Sigmoid colon (tissue), 7 donors: ENCODE measurements at regions of chr11 and their contacts with region 1.

Region 1: DNA sequence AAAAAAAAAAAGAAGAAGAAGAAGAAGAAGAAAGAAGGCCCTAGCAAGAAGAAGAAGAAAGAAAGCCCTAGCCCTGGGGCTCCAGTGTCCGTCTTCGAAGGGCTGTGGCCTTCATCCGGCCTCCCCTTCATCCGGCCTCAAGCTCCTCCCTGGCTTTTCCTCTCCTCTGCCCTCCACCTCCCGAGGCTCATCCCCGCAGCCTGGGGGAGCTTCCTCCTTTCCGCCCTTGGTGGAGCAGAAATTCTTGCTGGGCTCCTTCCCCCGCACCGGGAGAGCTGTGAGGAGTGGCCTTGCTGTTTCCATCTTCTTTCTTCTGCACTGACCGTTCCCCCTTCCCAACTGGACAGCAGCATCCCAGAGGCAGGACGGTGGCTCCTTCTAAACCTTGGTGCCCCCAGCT is 9.5 kb upstream of the LTO1 start:
- DNase-seq: peak; percentile 49
- H3K4me3 ChIP-seq: no peak overlapping the region
- H3K27ac ChIP-seq: no peak overlapping the region
- H3K4me1 ChIP-seq: peaks cover 0 to 9% (median 7%) of the 10 kb centered on the region in 4 donors
- H3K27me3 ChIP-seq: peaks cover 0 to 6% (median 5%) of the 10 kb centered on the region in 3 donors
- CTCF ChIP-seq: no peak
- EP300 ChIP-seq: no peak
- POLR2A ChIP-seq: no peak

Region 2: GRCh38 chr11:69888483-69889076 is 203.9 kb after region 1 on chr11:
- intact Hi-C with region 1: loop called (anchors 1 kb)
- DNase-seq: no peak
- H3K4me3 ChIP-seq: no peak overlapping the region
- H3K27ac ChIP-seq: no peak overlapping the region
- H3K4me1 ChIP-seq: no peaks in the 10 kb centered on the region
- H3K27me3 ChIP-seq: peaks cover 3 to 39% (median 14%) of the 10 kb centered on the region in 3 donors
- CTCF ChIP-seq: peak; percentile 32 to 85 (median 77)
- EP300 ChIP-seq: no peak
- POLR2A ChIP-seq: no peak